Activated CD8-positive, alpha-beta T cell treated with anti-CD3 and anti-CD28 coated beads, Interleukin-2, amount 10 ng/mL, durations not matched to agents 7 days and 5 days (primary cell): ENCODE measurements at regions of chr20 and their contacts with region 1.

Region 1: DNA sequence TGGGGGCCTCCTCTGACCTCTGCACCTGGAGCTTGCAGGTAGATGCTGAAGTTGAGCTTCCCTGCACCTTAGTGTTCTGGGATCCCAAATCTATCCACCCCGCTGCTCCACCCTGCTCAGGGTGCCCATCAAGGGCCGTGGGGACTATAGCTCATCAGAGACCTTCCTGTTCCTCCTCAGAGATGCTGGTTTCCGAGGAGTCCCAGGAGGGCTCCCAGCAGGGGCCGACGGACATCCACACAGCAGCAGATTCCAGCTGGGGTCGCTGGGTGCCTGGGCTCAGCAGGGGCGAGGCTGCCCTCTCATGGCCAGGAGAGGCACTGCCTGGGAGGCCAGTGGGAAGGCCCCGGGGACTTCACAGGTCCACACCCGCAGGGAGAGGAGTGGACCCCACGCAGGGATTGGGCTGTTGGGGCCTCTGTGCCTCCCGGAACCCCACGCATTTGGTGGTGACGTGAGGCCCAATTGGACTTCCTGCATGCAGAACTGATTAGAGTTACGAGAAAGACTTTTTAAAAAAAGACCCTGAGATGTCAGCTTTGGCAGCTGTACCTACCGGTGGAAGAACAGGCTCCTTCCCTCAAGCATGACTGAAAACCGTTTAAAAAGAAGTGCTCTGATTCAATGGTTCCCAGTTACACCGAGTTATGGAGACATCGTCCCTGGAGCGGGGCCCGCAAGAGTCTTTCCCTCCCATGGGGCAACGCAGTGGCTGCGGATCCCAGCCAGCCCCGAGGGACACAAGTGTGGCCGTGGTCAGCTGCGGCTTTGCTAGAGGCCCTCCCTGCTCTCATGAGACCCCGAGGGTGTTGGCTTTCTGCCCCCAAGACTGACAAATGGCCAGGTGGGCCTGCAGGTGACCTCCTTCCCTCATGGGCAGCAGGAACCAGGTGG is 25.3 kb upstream of the SLCO4A1 start:
- DNase-seq: peak; percentile 81
- ATAC-seq: peak; percentile 73
- H3K4me3 Mint-ChIP-seq: peak overlapping the region; percentile 63
- H3K27ac Mint-ChIP-seq: peak overlapping the region; percentile 98
- H3K4me1 Mint-ChIP-seq: peaks cover 44% of the 10 kb centered on the region
- H3K27me3 Mint-ChIP-seq: peaks cover 15% of the 10 kb centered on the region

Region 2: GRCh38 chr20:62409931-62410745 is 206.8 kb before region 1 on chr20:
- CTCF ChIA-PET with region 1: interaction called, 10 read pairs
- POLR2A ChIA-PET with region 1: no interaction called
- DNase-seq: peak; percentile 54
- ATAC-seq: no peak
- H3K4me3 Mint-ChIP-seq: no peak overlapping the region
- H3K27ac Mint-ChIP-seq: no peak overlapping the region
- H3K4me1 Mint-ChIP-seq: peaks cover 24% of the 10 kb centered on the region
- H3K27me3 Mint-ChIP-seq: no peaks in the 10 kb centered on the region

Region 3: DNA sequence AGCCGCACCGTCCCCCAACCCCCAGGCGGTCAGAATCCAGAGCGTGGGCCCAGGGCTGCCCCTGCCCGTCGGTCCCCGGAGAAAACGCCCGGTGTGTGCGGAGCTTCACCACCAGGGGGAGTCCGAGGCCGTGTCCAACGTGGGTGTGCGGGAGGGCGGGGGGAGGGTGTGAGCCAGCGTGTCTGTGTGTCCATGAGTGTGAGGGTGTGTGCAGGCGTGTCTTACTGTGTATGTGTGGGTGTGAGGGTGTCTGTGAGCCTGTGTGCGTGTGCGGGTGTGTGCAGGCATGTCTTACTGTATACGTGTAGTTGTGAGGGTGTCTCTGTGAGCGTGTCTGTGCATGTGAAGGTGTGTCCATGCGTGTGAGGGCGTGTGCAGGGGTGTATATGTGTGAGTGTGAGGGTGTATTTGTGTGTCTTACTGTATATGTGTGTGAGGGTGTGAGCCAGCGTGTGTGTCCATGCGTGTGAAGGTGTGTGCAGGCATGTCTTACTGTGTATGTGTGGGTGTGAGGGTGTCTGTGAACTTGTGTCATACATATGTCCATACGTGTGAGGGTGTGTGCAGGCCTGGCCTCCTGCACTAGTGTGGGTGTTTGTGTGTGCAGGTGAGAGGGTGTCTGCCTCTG is 116.6 kb before region 1 on chr20:
- CTCF ChIA-PET with region 1: interaction called, 45 read pairs
- POLR2A ChIA-PET with region 1: interaction called, 4 read pairs
- DNase-seq: peak; percentile 85
- ATAC-seq: peak; percentile 73
- H3K4me3 Mint-ChIP-seq: no peak overlapping the region
- H3K27ac Mint-ChIP-seq: peak overlapping the region; percentile 43
- H3K4me1 Mint-ChIP-seq: peaks cover 25% of the 10 kb centered on the region
- H3K27me3 Mint-ChIP-seq: no peaks in the 10 kb centered on the region

Region 4: DNA sequence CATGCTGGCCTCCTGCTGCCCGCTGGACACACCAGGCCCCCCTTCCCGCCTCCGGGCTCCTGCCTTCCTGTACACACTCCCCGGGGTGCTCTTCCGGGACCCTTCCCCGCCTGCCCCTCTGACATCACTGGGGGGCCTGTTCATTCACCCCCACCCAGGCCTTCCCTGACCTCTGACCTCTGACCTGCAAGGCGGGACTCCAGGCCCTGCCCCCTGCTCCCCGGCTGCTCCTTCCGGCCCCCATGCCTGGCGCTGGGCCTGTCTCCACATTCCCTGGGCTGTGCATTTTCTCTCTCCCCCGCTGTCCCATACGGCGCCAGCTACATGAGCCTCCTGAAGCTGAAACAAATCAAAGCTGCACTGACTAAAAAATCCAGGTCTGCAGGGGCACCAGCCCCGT is 69.6 kb before region 1 on chr20:
- CTCF ChIA-PET with region 1: no interaction called
- POLR2A ChIA-PET with region 1: no interaction called
- DNase-seq: no peak
- ATAC-seq: no peak
- H3K4me3 Mint-ChIP-seq: no peak overlapping the region
- H3K27ac Mint-ChIP-seq: no peak overlapping the region
- H3K4me1 Mint-ChIP-seq: peaks cover 11% of the 10 kb centered on the region
- H3K27me3 Mint-ChIP-seq: peaks cover 19% of the 10 kb centered on the region

Region 5: DNA sequence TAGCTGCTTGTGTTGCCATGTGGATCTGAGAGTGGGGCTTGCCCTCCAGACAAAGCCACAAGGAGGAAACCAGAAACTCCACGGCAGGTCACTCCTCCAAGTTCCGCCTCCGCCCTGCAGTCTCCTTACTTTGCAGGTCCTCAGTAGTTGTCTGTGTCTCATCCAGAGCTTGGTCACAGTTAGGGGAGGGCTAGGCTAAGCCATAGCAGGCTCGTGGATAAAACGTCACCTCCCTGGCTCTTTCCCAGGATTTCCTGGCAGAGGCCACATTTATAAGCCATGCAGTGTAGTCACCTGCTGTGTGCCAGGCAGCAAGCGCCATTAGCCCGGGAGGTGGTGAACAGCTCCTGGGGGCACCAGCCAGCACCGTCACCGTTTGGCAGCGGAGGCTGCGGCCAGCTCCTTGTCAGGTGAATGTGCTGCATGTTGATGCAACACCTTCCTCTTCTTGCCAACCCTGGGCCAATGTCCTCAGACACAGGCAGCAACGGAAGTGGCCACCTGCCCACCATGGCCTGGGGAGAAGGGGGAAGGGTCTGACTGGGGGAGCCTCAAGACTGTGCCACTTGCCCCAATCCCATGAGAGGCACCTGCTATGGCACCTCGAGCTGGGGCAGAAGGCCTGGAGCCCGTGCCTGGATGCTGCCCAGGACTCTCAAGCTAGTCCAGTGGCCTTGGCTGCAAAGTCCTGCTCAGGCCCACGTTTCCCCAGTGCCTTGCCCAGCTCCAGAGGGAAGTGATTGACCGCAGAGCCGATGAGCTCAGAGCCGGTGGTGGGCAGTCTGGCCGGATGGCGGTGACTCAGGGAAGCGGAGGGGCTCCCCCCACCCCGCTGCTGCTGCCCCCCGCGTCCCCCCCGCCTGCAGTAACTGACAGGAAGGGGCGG is 13.7 kb before region 1 on chr20:
- CTCF ChIA-PET with region 1: interaction called, 30 read pairs
- POLR2A ChIA-PET with region 1: interaction called, 7 read pairs
- DNase-seq: peak; percentile 77
- ATAC-seq: peak; percentile 75
- H3K4me3 Mint-ChIP-seq: peak overlapping the region; percentile 56
- H3K27ac Mint-ChIP-seq: peak overlapping the region; percentile 87
- H3K4me1 Mint-ChIP-seq: peaks cover 55% of the 10 kb centered on the region
- H3K27me3 Mint-ChIP-seq: peaks cover 28% of the 10 kb centered on the region

Region 6: DNA sequence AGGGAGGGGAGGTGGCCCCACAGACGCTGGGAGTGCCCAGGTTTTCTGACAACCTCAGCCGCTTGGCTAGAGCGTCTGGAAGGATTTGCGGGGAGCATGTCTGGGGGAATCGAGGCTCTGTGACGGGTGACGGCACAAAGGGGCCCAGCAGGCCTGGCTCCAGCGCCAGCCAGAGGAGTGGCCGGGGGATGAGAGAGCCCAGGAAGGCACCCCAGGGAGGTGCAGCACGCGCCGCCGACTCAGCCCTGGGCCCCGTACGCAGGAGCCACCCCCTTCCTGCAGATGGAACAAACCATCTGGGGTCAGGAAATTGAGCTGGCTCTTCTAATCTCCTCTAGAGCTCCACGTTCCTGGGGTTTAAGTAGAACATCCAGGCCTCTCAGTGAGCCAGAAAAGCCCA is 19.5 kb after region 1 on chr20:
- CTCF ChIA-PET with region 1: interaction called, 14 read pairs
- POLR2A ChIA-PET with region 1: interaction called, 15 read pairs
- DNase-seq: peak; percentile 57
- ATAC-seq: peak; percentile 75
- H3K4me3 Mint-ChIP-seq: peak overlapping the region; percentile 15
- H3K27ac Mint-ChIP-seq: peak overlapping the region; percentile 55
- H3K4me1 Mint-ChIP-seq: peaks cover 37% of the 10 kb centered on the region
- H3K27me3 Mint-ChIP-seq: peaks cover 20% of the 10 kb centered on the region

Region 7: DNA sequence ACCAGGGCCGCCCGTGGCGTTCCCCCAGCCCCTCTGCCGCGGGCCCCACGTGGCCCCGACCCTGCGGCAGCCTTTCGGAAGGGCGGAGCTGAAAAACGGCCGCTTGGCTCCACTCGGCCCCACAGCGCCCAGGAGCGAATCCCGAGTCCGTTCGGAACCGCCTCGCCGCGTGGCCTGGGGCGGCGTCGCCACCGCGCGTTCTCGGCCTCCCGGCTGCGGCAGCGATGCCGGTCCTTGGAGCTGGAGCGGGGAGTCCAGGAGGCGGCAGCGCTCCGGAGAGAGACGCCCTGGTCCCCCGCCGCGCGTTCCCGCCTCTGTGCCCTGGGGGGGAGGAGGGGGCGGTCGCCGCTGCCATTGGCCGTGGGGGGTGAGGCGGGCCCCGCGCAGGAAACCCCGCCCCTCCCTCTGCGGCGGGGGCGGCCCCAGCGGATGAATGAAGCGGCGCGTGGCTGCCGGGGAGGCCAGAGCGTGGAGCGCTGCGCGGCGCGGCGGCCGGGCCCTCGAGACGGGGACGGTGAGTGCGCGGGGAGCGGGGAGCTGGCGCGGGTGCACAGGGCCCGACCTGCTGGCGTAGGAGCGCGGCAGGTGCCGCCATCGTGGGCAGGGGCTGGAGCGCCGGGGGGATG is 25.2 kb after region 1 on chr20 and contains the start of gene SLCO4A1:
- CTCF ChIA-PET with region 1: interaction called, 14 read pairs
- POLR2A ChIA-PET with region 1: interaction called, 15 read pairs
- DNase-seq: peak; percentile 92
- ATAC-seq: peak; percentile 86
- H3K4me3 Mint-ChIP-seq: peak within 1 kb of the TSS; percentile 88
- H3K27ac Mint-ChIP-seq: peak within 1 kb of the TSS; percentile 91
- H3K4me1 Mint-ChIP-seq: peaks cover 48% of the 10 kb centered on the region
- H3K27me3 Mint-ChIP-seq: peaks cover 8% of the 10 kb centered on the region
- total RNA-seq, gene SLCO4A1: 79.4 to 79.9 TPM

Region 8: DNA sequence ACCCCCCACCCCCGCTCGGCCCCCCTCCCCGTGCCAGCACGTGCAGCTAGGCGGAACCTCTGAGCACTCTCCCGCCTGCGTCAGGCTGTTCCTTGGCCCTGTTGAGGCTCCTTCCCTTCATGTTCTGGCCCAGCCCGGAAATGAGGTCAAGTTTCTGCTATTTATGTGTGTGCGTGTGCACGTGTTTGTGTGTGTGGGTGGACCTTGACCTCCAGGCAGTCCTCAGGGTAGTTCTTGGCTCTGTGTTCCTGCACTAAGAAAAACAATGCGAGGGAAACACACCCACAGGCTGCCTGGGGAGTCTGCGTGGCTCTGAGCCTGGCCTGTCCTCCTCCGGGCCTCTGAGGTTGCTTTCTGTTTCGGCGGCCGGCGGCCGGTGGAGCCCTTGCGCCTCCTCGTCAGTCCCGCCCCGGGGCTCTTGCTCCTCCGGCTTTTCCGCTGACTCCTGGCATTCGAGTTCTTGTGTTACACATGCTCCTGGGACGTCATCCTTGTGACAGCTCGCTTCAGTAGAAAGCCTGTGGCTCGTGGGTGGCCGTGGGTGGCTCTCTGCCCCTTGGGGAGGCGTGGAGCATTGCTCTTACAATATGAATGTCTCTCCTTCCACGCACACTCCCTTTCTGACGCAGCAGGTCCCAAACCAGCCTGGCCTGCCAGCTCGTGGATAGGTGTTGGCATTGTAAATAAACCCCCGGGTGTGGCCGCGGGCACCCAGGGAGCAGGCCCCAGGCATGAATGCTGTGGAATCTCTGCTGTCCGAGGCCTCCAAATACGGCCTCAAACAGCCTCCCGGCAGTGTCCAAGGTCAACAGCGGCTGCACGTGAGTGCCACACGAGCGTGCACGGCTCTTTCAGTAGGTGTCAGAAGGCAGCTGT is 35.3 kb after region 1 on chr20:
- CTCF ChIA-PET with region 1: interaction called, 12 read pairs
- POLR2A ChIA-PET with region 1: interaction called, 6 read pairs
- DNase-seq: peak; percentile 84
- ATAC-seq: peak; percentile 63
- H3K4me3 Mint-ChIP-seq: peak overlapping the region; percentile 75
- H3K27ac Mint-ChIP-seq: peak overlapping the region; percentile 96
- H3K4me1 Mint-ChIP-seq: peaks cover 67% of the 10 kb centered on the region
- H3K27me3 Mint-ChIP-seq: no peaks in the 10 kb centered on the region